Calu3 (cell line): ENCODE measurements at regions of chr6 and their contacts with region 1.

Region 1: DNA sequence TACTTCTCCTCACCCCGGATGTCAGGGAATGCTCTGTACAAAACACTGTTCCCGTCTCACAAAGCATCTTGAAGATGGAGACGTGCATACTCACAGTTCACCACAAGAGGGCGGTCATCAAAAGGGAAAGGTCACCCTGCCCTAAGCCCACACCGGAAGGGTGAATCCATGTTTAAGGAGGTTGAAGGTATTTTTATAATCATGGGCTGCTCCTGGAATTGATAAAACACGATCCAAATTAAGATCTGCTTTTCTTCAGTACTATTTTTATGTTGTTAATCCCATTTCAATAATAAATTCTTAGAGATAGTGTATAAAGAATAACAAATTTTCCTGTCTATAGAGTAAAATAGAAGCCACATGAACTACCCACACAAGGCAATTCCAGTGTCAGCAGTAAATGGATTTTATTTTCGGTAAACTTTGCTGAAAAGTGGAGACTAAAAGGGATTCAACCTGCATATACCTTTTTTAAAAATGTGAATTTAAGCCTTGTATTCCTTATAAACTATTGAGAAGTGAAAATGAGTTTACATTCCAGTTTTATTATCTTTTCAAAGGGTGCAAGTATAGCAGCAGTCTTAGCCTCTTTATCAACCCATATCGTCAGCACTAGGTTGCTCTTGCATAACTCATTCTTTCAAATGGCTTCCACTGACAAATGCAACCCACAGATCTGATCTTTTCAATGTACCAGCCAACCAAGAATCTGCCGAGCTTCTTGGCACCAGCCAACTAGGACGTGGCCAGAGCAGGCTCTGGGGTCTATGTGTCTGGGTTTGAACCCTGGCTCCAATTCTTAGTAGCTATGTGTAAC is 79.7 kb upstream of the MBOAT1 start:
- DNase-seq: peak; percentile 93
- H3K4me3 Mint-ChIP-seq: no peak overlapping the region
- H3K27ac Mint-ChIP-seq: peak overlapping the region; percentile 14
- H3K4me1 Mint-ChIP-seq: no peaks in the 10 kb centered on the region
- H3K27me3 Mint-ChIP-seq: no peaks in the 10 kb centered on the region
- CTCF ChIP-seq: peak; percentile 97

Region 2: GRCh38 chr6:20092071-20092566 is 199.9 kb before region 1 on chr6:
- CTCF ChIA-PET with region 1: no interaction called
- intact Hi-C with region 1: loop called (anchors 5 kb)
- DNase-seq: peak; percentile 34
- H3K4me3 Mint-ChIP-seq: no peak overlapping the region
- H3K27ac Mint-ChIP-seq: no peak overlapping the region
- H3K4me1 Mint-ChIP-seq: no peaks in the 10 kb centered on the region
- H3K27me3 Mint-ChIP-seq: no peaks in the 10 kb centered on the region
- CTCF ChIP-seq: peak; percentile 87